ENCODE measurements at regions of chr3 and their contacts with region 1.

Region 1: DNA sequence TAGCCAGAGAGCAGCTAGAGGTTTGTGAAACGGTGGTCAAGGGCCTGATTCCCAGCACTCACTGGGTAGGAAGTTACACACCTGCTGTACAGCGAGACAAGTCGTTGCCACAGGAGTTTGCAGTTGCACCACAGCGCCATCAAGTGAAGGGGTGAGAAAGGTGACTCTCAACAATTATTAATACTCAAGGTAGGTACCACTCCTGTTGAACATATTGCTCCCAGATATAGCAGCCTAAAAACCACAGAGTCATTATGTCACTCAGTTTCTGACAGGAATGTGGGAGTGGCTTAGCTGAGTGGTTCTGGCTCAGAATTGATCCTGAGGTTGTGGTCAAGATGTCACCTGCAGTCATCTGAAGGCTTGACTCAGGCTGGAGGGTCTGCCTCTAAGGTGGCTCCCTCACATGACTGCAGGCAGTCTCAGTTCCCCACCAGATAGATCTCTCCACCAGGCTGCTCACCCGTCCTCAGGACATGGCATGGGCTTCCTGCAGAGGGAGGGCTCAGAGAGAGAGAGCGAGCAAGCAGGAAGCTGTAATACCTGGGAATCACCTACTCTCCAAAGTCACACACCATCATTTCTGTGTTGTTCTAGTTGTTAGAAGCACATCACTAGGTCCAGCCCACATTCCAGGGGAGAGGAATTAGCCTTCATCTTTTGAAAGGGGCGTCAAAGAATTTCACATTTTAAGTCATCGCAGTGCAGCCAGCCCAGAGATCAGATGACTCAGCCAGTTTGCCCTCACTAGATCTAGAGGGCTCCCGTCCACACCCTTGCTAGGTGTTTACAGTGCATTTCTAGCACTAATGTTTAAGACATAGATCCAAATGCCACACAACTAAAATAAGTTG is 17.0 kb upstream of the ANO10 start:
- DNase-seq: peak; percentile 26
- H3K4me3 Mint-ChIP-seq: no peak overlapping the region
- H3K27ac Mint-ChIP-seq: no peak overlapping the region
- H3K4me1 Mint-ChIP-seq: peaks cover 8% of the 10 kb centered on the region
- H3K27me3 Mint-ChIP-seq: peaks cover 11% of the 10 kb centered on the region

Region 2: DNA sequence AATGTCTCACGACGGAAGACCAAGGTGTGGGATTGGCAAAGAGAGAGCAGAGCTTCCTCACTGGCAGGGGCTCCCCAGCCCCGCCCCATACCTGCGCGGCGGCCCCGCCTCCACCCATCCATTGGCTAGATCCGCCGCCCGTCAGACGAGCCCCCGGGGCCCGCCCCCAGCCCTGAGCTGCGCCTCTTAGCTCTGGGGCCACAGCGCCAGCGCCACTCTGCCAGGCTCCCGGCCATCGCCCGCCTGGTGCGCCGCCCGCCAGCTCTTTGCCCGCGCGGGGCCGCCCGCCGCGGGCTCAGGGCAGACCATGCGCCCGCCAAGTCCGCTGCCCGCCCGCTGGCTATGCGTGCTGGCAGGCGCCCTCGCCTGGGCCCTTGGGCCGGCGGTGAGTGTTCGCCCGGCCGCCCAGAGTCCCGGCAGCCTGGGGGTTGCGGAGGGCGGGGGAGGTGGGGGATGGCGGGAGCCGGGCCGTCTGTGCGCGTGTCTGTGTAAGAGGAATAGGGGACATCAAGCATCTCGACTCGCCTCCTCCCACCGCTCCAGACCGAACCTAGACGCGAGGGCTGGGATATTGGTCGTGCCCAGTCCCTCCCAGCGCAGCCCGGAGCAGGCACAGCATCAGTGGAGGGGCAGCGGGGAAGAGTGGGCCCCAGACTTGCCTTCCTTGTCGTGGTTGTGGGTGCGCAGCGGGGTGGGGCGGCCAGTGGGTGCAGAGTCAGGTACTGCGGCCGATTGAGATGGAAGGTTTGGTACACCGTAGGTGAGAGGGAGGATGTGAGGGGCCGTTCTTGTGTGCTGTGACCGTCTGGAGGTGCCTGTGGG is 1136.2 kb before region 1 on chr3 and contains the start of gene VIPR1:
- intact Hi-C with region 1: no loop called
- DNase-seq: peak; percentile 85
- H3K4me3 Mint-ChIP-seq: peak within 1 kb of the TSS; percentile 86
- H3K27ac Mint-ChIP-seq: no peak within 1 kb of the TSS
- H3K4me1 Mint-ChIP-seq: peaks cover 31% of the 10 kb centered on the region
- H3K27me3 Mint-ChIP-seq: peaks cover 26% of the 10 kb centered on the region
- total RNA-seq, gene VIPR1: 0.69 and 0.88 TPM in 2 replicates

Region 3: DNA sequence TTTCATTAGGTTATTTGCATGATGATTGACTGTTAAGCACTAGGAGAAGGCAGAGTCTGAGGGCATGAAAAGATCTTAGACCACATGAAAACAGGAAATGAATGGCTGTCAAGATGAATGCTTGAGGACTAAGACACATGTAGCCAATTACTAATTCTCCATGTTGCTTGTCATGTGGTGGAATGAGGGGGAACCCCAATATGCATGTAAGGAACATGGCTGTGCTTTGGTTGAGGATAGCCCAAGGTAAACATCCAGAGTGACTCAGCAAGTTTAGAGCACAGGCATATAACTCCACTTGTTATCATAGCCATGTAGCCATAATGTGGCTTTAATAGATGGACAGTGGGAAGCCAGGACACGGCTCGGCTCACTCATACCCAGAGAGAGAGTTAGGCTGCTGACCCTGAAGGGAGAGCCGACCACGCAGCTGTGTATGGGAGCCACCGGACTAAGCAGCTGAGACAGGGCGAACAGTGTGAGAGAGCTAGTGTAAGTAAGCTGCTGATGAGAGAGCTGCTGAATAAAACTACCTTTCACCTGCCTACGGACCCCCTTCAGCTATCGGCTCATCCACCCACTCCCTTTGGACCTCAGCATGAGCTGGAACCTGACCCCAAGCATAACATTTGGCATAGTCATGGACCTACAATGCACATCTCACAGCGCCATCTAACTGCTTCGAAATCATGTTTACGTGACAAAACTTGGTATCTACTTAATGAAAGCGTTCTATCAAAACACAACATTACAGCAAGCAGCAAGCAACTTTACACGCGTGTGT is 54.6 kb before region 1 on chr3:
- intact Hi-C with region 1: no loop called
- DNase-seq: no peak
- H3K4me3 Mint-ChIP-seq: no peak overlapping the region
- H3K27ac Mint-ChIP-seq: no peak overlapping the region
- H3K4me1 Mint-ChIP-seq: peaks cover 29% of the 10 kb centered on the region
- H3K27me3 Mint-ChIP-seq: peaks cover 3% of the 10 kb centered on the region

Region 4: DNA sequence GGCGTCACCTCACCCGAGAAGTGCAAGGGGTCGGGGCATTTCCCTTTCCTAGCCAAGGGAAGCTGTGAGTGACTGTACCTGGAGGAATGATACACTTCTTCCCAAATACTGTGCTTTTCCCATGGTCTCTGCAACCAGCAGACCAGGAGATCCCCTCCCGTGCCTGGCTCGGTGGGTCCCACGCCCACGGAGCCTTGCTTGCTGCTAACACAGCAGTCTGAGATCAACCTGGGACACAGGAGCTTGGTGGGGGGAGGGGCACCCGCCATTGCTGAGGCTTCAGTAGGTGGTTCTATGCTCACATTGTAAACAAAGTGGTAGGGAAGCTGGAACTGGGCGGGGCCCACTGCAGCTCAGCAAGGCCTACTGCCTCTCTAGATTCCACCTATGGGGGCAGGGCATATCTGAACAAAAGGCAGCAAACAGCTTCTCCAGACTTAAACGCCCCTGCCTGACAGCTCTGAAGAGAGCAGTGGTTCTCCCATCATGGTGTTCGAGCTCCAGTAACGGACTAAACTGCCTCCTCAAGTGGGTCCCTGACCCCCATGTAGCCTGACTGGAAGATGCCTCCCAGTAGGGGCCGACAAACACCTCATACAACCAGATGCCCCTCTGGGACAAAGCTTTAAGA is 20.5 kb after region 1 on chr3:
- intact Hi-C with region 1: loop called (anchors 1 kb)
- DNase-seq: no peak
- H3K4me3 Mint-ChIP-seq: no peak overlapping the region
- H3K27ac Mint-ChIP-seq: no peak overlapping the region
- H3K4me1 Mint-ChIP-seq: no peaks in the 10 kb centered on the region
- H3K27me3 Mint-ChIP-seq: peaks cover 6% of the 10 kb centered on the region